GM10248 (cell line): ENCODE measurements at regions of chr3 and their contacts with region 1.

Region 1: DNA sequence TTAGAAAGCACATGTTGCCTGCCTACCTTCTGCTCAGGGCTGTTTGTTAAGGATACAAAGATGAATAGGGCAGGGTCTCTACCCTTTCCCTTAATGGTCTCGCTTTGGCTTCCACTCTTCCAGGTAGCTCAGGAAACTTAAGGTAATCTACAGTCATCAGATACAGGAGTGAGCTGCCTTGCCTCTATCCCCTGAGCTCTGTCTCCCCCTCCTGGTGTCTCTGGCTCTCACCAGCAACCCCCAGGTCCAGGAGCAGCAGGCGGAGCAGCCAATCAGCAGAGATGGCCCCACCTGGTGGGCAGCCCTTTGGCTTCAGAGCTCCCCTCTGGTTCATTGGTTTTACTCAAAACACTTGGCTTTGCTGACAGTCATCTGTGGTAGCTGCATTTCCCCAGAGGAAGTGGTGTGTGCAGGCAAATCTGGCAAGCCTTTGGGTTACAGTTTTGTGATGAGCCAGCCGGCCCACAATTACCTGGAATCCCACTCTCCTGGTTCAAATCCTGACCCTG is 8.5 kb upstream of the CX3CR1 start:
- DNase-seq: peak; percentile 94
- CTCF ChIP-seq: peak; percentile 95

Region 2: DNA sequence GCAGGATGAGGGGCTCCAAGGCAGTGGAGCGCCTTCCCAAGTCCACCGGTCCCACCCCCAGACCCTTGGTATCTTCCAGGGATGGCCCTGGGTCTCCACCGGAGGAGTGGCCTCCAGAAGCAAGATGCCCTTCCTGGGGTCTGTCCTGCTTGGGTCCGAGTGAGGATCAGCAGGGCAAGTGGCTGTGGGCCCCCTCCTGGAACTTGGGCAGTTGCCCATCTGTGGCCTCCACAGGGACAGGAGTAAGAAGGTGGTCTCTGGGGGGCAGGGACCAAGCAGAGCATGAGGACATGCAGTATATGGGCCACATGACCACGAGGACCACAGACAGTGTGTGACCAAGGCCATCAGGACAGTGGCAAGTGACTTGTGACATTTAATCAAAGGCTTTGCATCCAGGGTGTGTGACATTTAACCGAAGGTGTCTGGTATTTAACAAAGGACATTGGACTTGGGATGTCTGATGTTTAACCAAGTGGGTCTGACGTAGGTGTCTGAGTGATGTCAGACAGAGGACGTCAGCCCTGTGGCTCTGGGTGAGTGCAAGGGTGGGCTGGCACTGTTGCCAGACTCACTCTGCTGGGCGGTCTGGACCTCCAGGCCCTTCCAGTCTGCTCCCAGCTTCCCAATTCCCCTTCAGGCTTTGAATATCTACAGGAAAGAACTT is 673.5 kb before region 1 on chr3:
- CTCF ChIA-PET with region 1: no interaction called
- POLR2A ChIA-PET with region 1: no interaction called
- DNase-seq: no peak
- CTCF ChIP-seq: no peak

Region 3: GRCh38 chr3:39086144-39086543 is 202.2 kb before region 1 on chr3:
- CTCF ChIA-PET with region 1: interaction called, 11 read pairs
- POLR2A ChIA-PET with region 1: no interaction called
- DNase-seq: no peak
- CTCF ChIP-seq: no peak

Region 4: GRCh38 chr3:39146984-39147591 is 141.3 kb before region 1 on chr3:
- CTCF ChIA-PET with region 1: interaction called, 49 read pairs
- POLR2A ChIA-PET with region 1: interaction called, 3 read pairs
- DNase-seq: no peak
- CTCF ChIP-seq: no peak

Region 5: DNA sequence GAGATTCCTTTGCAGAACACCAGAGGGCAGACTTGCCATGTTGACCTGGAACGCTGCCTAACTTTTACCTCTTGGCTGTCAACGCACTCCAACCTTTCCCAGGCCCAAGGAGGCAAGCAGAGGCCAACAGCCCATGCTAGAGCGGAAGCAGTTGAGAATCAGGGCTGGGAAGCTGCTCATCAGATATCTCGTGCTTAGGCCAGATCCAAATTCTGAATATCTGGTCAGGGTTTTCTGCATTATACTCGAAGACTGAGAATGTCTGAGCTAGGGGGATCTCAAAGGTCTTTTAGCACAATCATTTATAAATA is 98.4 kb before region 1 on chr3:
- CTCF ChIA-PET with region 1: interaction called, 691 read pairs
- POLR2A ChIA-PET with region 1: interaction called, 4 read pairs
- DNase-seq: peak; percentile 82
- CTCF ChIP-seq: peak; percentile 65

Region 6: DNA sequence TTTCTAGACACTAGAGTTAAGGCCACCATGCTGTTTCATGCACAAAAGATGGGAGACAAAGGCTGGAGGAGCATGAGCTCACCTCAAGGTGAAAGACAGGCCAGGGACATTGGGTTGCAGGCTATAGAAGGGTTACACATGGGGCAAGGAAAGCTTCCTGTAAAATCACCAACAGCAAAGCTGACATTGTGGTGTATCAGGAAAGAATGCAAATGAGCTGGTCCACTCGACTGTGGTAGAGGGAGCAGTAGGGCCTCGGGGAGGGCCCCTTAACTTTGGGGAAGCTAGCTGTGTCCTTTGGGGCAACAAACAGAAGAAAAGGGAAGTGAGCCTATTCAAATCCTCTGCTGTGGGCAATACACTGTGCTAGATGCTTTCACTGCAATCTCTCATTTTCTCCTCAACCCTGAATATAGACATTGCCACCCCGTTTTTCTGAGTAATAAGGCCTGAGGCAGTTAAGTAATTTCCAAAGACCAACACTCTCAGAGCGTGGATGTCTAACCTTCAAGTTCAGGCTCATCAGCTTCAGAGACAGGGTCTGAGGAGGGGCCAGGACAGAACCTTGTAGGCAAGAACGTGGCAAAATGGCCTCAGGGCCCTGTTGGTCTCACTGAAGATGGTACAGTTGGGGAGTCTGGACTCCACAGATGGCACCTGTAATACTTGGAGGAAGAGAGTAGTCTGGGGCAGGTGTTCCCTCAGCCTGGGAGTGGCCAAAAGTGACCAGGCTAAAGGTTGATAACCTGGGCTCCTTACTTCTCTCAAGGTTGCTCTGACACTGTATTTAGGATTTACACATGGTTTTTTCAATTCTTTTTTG is 32.6 kb before region 1 on chr3:
- CTCF ChIA-PET with region 1: interaction called, 24 read pairs
- POLR2A ChIA-PET with region 1: no interaction called
- DNase-seq: peak; percentile 80
- CTCF ChIP-seq: no peak

Region 7: GRCh38 chr3:39315420-39315819 is 27.1 kb after region 1 on chr3:
- CTCF ChIA-PET with region 1: interaction called, 13 read pairs
- POLR2A ChIA-PET with region 1: no interaction called
- DNase-seq: no peak
- CTCF ChIP-seq: no peak

Region 8: DNA sequence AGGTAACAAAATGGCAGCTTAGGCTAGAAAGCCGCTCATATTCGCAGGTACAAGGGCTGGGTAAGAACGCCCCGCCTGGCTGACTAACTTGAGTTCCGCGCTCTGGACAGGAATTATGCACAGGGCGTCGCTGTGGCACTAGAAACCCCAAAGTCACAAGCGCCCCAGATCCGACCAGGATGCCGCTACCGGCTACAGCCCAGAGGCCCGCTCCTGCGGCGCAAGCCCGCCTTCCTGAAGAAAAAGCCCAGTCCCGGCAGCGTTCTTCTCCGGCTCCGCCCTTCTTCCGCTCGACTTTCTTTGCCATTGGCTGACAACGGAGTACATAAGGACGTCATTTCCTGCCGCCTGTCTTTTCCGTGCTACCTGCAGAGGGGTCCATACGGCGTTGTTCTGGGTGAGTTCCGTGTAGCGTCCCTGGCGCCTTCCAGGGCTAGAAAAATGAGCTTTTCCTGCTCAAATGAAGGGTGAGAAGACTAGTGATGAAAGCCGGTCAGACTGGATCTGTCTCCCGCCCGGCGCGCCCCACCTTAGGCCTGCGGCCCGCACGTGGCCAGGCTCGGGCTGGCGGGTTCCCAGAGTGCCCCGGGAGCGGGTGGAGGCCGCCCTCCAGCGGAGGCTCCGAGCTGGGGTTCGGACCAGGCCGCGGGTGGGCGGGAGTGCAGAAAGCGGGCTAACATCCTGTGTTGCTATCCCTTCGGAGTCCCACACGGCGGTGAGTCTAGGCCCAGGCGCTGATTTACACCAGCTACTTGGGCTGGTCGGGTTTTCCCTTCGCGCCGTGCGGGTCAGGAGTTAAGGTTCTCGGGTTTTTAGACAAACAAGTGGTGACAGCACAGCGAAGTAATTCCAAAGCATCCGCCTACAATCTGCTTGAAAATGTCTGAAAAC is 118.3 kb after region 1 on chr3 and contains the start of gene RPSA:
- CTCF ChIA-PET with region 1: interaction called, 10 read pairs
- POLR2A ChIA-PET with region 1: no interaction called
- DNase-seq: peak; percentile 96
- CTCF ChIP-seq: peak; percentile 56